ENCODE measurements at regions of chr16 and their contacts with region 1.

Region 1: GRCh38 chr16:20883558-20884556 is 16.3 kb downstream of the DCUN1D3 start:
- DNase-seq: peak; percentile 88
- ATAC-seq: peak; percentile 79
- H3K4me3 ChIP-seq: no peak overlapping the region
- H3K27ac ChIP-seq: no peak overlapping the region
- H3K4me1 ChIP-seq: peaks cover 18% of the 10 kb centered on the region
- H3K27me3 ChIP-seq: no peaks in the 10 kb centered on the region
- CTCF ChIP-seq: no peak
- POLR2A ChIP-seq: no peak
- RAD21 ChIP-seq: no peak

Region 2: GRCh38 chr16:20866145-20866772 is 17.6 kb before region 1 on chr16:
- CTCF ChIA-PET with region 1: interaction called, 4 read pairs
- POLR2A ChIA-PET with region 1: no interaction called
- dilution Hi-C with region 1: no loop called
- in situ Hi-C with region 1: no loop called
- intact Hi-C with region 1: loop called (anchors 2 kb)
- DNase-seq: peak; percentile 87
- ATAC-seq: peak; percentile 76
- H3K4me3 ChIP-seq: no peak overlapping the region
- H3K27ac ChIP-seq: peak overlapping the region; percentile 99
- H3K4me1 ChIP-seq: peaks cover 20% of the 10 kb centered on the region
- H3K27me3 ChIP-seq: no peaks in the 10 kb centered on the region
- CTCF ChIP-seq: no peak
- POLR2A ChIP-seq: no peak
- RAD21 ChIP-seq: no peak

Measured in IMR-90 (cell line).